ENCODE measurements at regions of chr4 and their contacts with region 1.

Region 1: DNA sequence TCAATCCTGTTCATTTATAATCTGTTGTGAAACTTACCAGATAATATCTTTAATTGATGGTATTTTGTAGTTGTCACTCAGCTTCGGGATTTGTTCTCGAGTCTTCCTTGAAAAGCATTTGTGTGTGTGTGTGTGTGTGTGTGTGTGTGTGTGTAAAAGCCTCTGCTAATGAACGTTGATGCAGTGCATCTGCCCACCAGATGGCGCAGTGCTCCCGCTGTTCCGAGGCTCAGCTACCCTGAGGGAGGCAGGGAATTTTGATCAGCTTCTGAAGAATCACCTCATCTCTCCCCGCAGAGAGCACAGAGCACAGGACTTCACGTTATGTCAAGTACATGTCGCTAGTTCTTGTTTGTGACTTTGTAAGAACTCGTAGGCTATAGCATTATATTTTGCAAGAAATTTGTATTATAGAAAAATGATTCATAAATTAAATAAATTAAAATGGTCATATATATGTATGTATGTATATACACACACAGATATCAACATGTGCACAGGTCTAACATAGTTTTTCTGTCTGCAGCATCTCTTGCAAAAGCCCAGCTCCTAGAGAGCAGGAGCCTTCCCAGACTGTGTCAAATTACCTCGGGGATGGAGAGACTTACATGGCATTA is 316.7 kb upstream of the IGFBP7 start:
- DNase-seq: peak in 1 of 2 experiments; percentile 37
- H3K4me3 ChIP-seq: no peak overlapping the region
- H3K27ac ChIP-seq: no peak overlapping the region
- H3K4me1 ChIP-seq: no peaks in the 10 kb centered on the region
- H3K27me3 ChIP-seq: no peaks in the 10 kb centered on the region
- CTCF ChIP-seq: peak; percentile 69

Region 2: GRCh38 chr4:57037982-57038604 is 388.8 kb before region 1 on chr4:
- CTCF ChIA-PET with region 1: interaction called, 4 read pairs
- POLR2A ChIA-PET with region 1: no interaction called
- intact Hi-C with region 1: loop called (anchors 5 kb)
- DNase-seq: peak in 1 of 2 experiments; percentile 53
- H3K4me3 ChIP-seq: no peak overlapping the region
- H3K27ac ChIP-seq: no peak overlapping the region
- H3K4me1 ChIP-seq: no peaks in the 10 kb centered on the region
- H3K27me3 ChIP-seq: no peaks in the 10 kb centered on the region
- CTCF ChIP-seq: peak; percentile 77

Region 3: DNA sequence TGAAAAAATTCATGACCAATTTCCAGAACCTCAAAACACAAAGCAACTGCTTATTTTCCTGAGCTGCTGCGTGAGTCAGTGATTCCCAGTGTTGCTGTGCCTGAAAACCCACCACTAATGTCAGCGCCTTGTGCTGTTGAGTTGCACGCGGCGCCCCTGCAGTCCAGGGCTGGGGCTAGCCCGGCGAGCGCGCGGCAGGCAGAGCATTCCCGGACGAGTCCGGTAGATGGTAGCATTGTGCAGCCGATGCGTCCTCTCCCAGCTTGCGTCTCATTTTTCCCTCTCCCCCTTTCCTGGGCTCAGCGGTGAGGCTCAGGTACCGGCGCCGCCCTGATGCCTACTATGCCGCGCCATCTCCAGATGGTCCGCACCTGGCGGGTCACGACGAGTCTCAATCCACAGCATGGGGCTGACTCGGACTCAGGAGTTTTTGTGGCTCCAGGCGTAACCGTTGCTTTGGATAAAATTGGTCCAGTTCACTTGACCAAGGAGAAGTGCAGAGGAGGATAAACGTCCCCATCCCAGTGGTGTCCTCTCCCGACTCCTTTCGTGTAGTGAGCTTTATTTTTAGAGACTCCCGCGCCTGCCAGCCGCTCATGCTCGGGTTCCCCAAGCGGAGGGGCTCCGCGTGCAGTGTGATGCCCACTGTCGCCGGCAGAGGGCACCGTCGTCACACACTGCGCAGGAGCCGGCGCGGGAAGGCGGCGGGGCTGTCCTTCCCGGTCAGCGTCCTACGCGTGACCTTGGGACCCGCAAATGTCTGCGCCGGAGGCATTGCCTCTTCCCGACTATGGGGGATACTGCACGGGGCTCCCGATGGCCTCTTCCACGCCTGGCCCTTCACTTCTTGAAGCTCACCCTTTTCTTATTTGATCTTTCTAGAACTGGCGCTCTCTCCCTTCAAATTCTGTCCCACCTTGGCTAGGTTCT is 263.1 kb before region 1 on chr4:
- CTCF ChIA-PET with region 1: interaction called, 3 read pairs
- POLR2A ChIA-PET with region 1: no interaction called
- intact Hi-C with region 1: loop called (anchors 10 kb)
- DNase-seq: peak; percentile 39 to 69
- H3K4me3 ChIP-seq: peak overlapping the region; percentile 66
- H3K27ac ChIP-seq: no peak overlapping the region
- H3K4me1 ChIP-seq: no peaks in the 10 kb centered on the region; the same call in 1 of the 2 replicates
- H3K27me3 ChIP-seq: no peaks in the 10 kb centered on the region
- CTCF ChIP-seq: peak; percentile 80

Region 4: GRCh38 chr4:57190601-57191481 is 236.0 kb before region 1 on chr4:
- CTCF ChIA-PET with region 1: no interaction called
- POLR2A ChIA-PET with region 1: no interaction called
- intact Hi-C with region 1: loop called (anchors 10 kb)
- DNase-seq: peak in 1 of 2 experiments; percentile 2
- H3K4me3 ChIP-seq: no peak overlapping the region
- H3K27ac ChIP-seq: no peak overlapping the region
- H3K4me1 ChIP-seq: no peaks in the 10 kb centered on the region
- H3K27me3 ChIP-seq: no peaks in the 10 kb centered on the region
- CTCF ChIP-seq: peak; percentile 55

Region 5: DNA sequence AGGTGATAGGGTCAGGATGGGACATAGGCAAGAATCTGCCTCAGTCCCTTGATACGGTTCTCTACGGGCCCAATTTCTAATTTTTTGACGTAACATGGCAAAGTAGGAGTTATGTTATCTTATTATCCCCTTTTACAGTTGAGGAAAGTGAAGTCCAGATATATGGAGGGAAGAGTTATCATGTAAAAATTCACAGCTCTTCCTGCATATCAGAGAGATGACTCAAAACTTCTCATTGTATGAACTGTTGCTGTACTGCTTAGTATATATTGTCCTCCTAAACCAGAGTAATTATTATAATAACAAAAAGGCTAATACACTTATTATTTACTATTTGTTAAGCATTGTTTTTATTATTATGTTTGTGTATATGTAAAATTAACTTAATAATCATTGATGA is 56.2 kb before region 1 on chr4:
- CTCF ChIA-PET with region 1: no interaction called
- POLR2A ChIA-PET with region 1: no interaction called
- intact Hi-C with region 1: no loop called
- DNase-seq: no peak
- H3K4me3 ChIP-seq: no peak overlapping the region
- H3K27ac ChIP-seq: no peak overlapping the region
- H3K4me1 ChIP-seq: no peaks in the 10 kb centered on the region
- H3K27me3 ChIP-seq: no peaks in the 10 kb centered on the region
- CTCF ChIP-seq: no peak

Region 6: GRCh38 chr4:57405385-57405784 is 21.5 kb before region 1 on chr4:
- CTCF ChIA-PET with region 1: no interaction called
- POLR2A ChIA-PET with region 1: no interaction called
- intact Hi-C with region 1: loop called (anchors 2 kb)
- DNase-seq: peak; percentile 45 to 58
- H3K4me3 ChIP-seq: no peak overlapping the region
- H3K27ac ChIP-seq: peak overlapping the region; percentile 68
- H3K4me1 ChIP-seq: no peaks in the 10 kb centered on the region
- H3K27me3 ChIP-seq: no peaks in the 10 kb centered on the region
- CTCF ChIP-seq: no peak